ENCODE measurements at regions of chr1 and their contacts with region 1.

Region 1: GRCh38 chr1:37434292-37434907 is 40.0 kb upstream of the ZC3H12A start:
- DNase-seq: peak; percentile 43 to 80 (median 71)
- H3K4me3 ChIP-seq: no peak overlapping the region
- H3K27ac ChIP-seq: no peak overlapping the region
- H3K4me1 ChIP-seq: no peaks in the 10 kb centered on the region
- H3K27me3 ChIP-seq: no peaks in the 10 kb centered on the region
- CTCF ChIP-seq: peak; percentile 77 to 93 (median 83)
- POLR2A ChIP-seq: no peak

Region 2: GRCh38 chr1:36516372-36517325 is 917.8 kb before region 1 on chr1:
- intact Hi-C with region 1: loop called in 1 of 2 experiments (anchors 10 kb)
- DNase-seq: peak; percentile 21 to 67 (median 47)
- H3K4me3 ChIP-seq: no peak overlapping the region
- H3K27ac ChIP-seq: no peak overlapping the region
- H3K4me1 ChIP-seq: no peaks in the 10 kb centered on the region
- H3K27me3 ChIP-seq: no peaks in the 10 kb centered on the region
- CTCF ChIP-seq: peak; percentile 47 to 66 (median 63)
- POLR2A ChIP-seq: no peak

Region 3: GRCh38 chr1:36576118-36576517 is 858.3 kb before region 1 on chr1:
- intact Hi-C with region 1: loop called (anchors 5 to 10 kb)
- DNase-seq: peak; percentile 22 to 64 (median 48)
- H3K4me3 ChIP-seq: no peak overlapping the region
- H3K27ac ChIP-seq: no peak overlapping the region
- H3K4me1 ChIP-seq: no peaks in the 10 kb centered on the region
- H3K27me3 ChIP-seq: peaks cover 26% of the 10 kb centered on the region
- CTCF ChIP-seq: peak; percentile 17 to 69 (median 58)
- POLR2A ChIP-seq: no peak

Region 4: GRCh38 chr1:36703526-36704208 is 730.7 kb before region 1 on chr1:
- intact Hi-C with region 1: loop called (anchors 5 to 10 kb)
- DNase-seq: peak; percentile 68 to 90 (median 80)
- H3K4me3 ChIP-seq: no peak overlapping the region
- H3K27ac ChIP-seq: no peak overlapping the region
- H3K4me1 ChIP-seq: no peaks in the 10 kb centered on the region
- H3K27me3 ChIP-seq: no peaks in the 10 kb centered on the region
- CTCF ChIP-seq: peak; percentile 77 to 92 (median 84)
- POLR2A ChIP-seq: no peak

Measured in adrenal gland (tissue), 19 donors.